ENCODE measurements at regions of chr19 and their contacts with region 1.

Region 1: DNA sequence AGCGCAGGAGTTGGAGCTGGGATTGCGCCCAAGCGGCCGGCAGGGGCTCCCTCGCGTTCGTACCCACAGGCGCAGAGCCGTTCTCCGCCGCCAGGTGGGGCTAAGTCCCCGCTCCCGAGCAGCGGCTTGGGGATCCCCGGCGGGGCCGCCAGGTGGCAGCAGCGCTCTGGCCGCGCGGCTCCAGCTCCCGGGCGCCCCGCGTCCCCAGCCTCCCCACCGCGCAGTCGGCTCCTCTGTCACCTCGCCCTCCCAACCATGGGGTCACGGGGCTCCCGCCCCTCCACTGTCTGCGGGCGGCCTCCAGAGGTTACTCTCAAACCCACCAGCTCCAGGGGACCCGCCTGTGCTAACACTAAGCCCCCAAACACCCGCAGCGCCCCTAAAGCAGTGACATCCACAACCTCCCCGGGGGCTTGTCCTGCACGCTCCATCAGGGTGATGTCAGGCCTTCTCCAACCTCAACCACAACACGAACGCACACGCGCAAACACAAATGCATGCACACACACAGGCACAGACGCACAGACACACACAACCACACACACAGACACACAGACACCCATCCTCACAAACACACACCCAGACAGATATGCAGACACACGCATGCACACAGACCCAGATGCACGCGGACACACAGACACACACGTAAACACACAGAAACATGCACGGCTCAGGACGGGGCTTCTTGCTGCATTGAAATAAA is 18.4 kb upstream of the KCTD15 start:
- DNase-seq: peak; percentile 85 to 96
- ATAC-seq: peak; percentile 61 to 85
- H3K4me3 ChIP-seq: peak overlapping the region; percentile 42
- H3K27ac ChIP-seq: peak overlapping the region in 1 of 2 experiments; percentile 42; a peak in 2 of 6 replicates
- H3K4me1 ChIP-seq: peaks cover 27% of the 10 kb centered on the region
- CTCF ChIP-seq: peak; percentile 100
- EP300 ChIP-seq: no peak
- POLR2A ChIP-seq: no peak
- RAD21 ChIP-seq: peak; percentile 100

Region 2: DNA sequence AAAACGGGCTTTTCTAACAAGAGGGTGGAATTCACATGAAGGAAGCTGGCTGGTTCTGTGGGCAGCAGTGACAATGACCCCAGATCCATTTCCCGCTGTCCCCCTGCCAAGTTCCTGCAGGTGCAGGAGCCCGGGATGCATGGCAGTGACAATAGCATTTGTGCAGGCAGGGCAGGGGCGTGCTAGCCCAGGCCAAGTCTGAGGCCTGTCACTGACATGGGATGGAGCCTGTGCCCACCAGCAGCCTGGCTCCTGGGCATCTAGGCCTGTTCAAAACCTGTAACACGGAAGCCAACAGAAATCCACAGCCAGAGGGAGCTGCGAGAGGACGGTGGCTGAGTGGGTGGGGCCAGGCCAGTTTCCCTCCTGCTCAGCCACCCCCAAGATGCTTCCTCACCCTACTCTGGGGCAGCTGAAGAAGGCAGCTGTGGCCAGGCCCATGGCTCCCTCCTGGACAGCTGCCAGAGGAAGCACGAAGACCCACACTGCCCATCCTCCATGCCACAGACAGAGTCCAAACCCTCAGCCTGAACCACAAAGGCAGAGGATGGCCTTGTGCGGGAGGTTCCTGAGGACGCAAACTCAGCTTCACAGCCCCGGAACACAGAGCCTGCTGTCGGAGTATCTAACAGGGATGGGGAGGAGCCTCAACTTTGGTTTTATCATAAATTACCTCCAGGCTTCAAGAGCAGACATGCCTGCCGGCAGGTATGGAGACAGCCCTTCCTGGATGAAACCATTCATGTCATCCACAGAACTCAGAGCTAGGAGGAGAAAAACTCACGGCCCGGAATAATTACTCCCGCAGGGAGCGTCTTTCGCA is 330.7 kb before region 1 on chr19:
- CTCF ChIA-PET with region 1: interaction called, 34 read pairs
- POLR2A ChIA-PET with region 1: no interaction called
- DNase-seq: no peak
- ATAC-seq: peak in 1 of 2 experiments; percentile 17; a peak in 1 of 6 replicates
- H3K4me3 ChIP-seq: no peak overlapping the region
- H3K27ac ChIP-seq: no peak overlapping the region
- H3K4me1 ChIP-seq: no peaks in the 10 kb centered on the region
- CTCF ChIP-seq: no peak
- EP300 ChIP-seq: no peak
- POLR2A ChIP-seq: no peak
- RAD21 ChIP-seq: no peak

Region 3: GRCh38 chr19:33641956-33642498 is 136.2 kb before region 1 on chr19:
- CTCF ChIA-PET with region 1: no interaction called
- POLR2A ChIA-PET with region 1: no interaction called
- DNase-seq: no peak
- ATAC-seq: no peak
- H3K4me3 ChIP-seq: no peak overlapping the region
- H3K27ac ChIP-seq: no peak overlapping the region
- H3K4me1 ChIP-seq: no peaks in the 10 kb centered on the region
- CTCF ChIP-seq: no peak
- EP300 ChIP-seq: no peak
- POLR2A ChIP-seq: no peak
- RAD21 ChIP-seq: no peak

Region 4: GRCh38 chr19:33809957-33810356 is 31.7 kb after region 1 on chr19:
- CTCF ChIA-PET with region 1: interaction called, 66 read pairs
- POLR2A ChIA-PET with region 1: interaction called, 4 read pairs
- DNase-seq: peak in 1 of 2 experiments; percentile 58
- ATAC-seq: peak in 1 of 2 experiments; percentile 32; a peak in 3 of 6 replicates
- H3K4me3 ChIP-seq: no peak overlapping the region
- H3K27ac ChIP-seq: peak overlapping the region in 1 of 2 experiments; percentile 21; a peak in 1 of 6 replicates
- H3K4me1 ChIP-seq: peaks cover 44% of the 10 kb centered on the region
- CTCF ChIP-seq: no peak
- EP300 ChIP-seq: no peak
- POLR2A ChIP-seq: no peak
- RAD21 ChIP-seq: no peak

Region 5: DNA sequence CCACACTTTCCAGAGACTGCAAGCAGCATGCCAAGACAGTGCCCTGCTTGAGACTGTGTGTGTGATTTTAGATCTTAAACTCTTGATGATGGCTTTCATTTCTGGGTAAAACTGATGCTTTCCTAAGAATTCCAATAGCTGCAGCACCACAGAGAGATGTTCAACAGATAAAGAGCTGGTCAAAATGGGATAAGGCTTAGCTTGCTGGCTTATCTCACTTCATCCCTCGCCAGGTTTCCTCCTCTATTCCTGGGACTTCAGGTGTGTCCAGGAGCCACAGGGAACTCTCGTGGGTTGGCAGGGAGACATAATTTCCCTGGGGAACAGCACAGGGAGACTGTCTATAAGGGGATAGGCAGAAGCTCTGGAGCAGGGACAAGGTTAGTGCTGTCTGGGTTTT is 155.7 kb after region 1 on chr19:
- CTCF ChIA-PET with region 1: interaction called, 25 read pairs
- POLR2A ChIA-PET with region 1: no interaction called
- DNase-seq: no peak
- ATAC-seq: no peak
- H3K4me3 ChIP-seq: no peak overlapping the region
- H3K27ac ChIP-seq: no peak overlapping the region
- H3K4me1 ChIP-seq: no peaks in the 10 kb centered on the region
- CTCF ChIP-seq: no peak
- EP300 ChIP-seq: no peak
- POLR2A ChIP-seq: no peak
- RAD21 ChIP-seq: no peak

Region 6: DNA sequence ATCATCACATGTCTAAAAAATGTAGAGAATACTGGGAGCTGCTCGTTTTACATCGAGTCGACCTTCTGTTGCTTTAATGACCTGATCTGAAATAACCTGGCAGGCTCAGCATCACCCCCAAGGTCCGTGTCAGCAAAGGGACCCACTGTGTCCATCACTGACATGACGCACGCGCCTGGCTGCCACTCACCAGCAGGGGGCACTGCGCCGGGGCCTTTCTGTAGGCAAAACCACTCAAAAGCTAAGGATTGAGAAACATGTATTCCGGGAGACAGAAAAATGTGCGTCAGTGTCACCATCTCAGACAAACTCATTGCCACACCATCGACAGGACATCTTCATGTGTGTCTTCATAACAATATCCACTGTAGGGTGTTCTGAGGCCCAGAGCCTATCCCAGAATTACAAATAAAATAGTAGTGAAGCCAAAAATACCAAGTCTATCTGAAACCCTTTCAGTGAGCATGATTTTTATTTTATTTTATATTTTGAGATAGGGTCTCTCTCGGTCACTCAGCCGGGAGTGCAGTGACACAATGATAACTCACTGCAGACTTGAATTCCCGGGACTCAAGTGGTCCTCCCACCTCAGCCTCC is 263.8 kb after region 1 on chr19:
- CTCF ChIA-PET with region 1: interaction called, 15 read pairs
- POLR2A ChIA-PET with region 1: no interaction called
- DNase-seq: peak; percentile 70 to 79
- ATAC-seq: peak; percentile 93 to 95
- H3K4me3 ChIP-seq: no peak overlapping the region
- H3K27ac ChIP-seq: no peak overlapping the region
- H3K4me1 ChIP-seq: no peaks in the 10 kb centered on the region
- CTCF ChIP-seq: peak; percentile 96
- EP300 ChIP-seq: no peak
- POLR2A ChIP-seq: no peak
- RAD21 ChIP-seq: peak; percentile 70 to 86

Region 7: GRCh38 chr19:34120846-34121639 is 342.8 kb after region 1 on chr19:
- CTCF ChIA-PET with region 1: interaction called, 28 read pairs
- POLR2A ChIA-PET with region 1: no interaction called
- DNase-seq: peak; percentile 77 to 87
- ATAC-seq: peak; percentile 70 to 83; a peak in 5 of 6 replicates
- H3K4me3 ChIP-seq: no peak overlapping the region
- H3K27ac ChIP-seq: no peak overlapping the region
- H3K4me1 ChIP-seq: no peaks in the 10 kb centered on the region
- CTCF ChIP-seq: peak; percentile 85
- EP300 ChIP-seq: no peak
- POLR2A ChIP-seq: no peak
- RAD21 ChIP-seq: peak; percentile 66 to 84

Measured in A549 (cell line).